Heart left ventricle (tissue), 16 donors: ENCODE measurements at regions of chr17 and their contacts with region 1.

Region 1: DNA sequence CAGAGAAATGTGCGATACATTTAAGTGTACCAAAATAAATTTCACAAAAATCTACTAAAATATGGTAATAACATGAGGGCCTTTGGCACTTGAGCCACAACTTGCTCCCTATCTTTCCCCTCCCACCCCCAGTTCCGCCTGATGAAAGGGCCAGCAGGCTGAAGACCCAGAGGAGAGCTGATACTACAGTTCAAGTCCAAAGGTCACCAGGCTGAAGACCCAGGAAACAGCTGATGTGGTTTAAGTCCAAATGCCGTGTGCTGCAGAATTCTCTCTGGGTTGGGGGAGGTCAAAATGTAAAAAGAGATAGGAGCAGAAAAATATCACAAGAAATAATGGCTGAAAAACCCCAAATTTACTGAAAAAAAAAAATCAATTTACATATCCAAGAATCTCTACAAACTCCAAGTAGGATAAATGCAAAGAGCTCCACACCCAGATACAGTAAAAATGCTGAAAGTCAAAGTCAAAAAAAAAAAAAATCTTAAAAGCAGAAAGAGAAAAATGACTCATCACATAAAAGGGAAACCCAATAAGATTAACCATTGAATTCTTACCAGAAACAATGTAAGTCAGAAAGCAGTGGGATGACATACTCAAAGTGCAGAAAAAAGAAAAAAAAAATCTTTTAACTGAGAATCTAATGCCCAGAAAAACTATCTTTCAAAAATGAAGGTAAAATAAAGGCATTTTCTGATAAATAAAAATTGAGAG is 452.1 kb upstream of the ASIC2 start:
- DNase-seq: no peak
- ATAC-seq: no peak
- H3K4me3 ChIP-seq: no peak overlapping the region
- H3K27ac ChIP-seq: no peak overlapping the region
- H3K4me1 ChIP-seq: no peaks in the 10 kb centered on the region
- H3K27me3 ChIP-seq: peaks cover 0 to 39% (median 0%) of the 10 kb centered on the region in 9 donors
- CTCF ChIP-seq: no peak
- POLR2A ChIP-seq: no peak

Region 2: GRCh38 chr17:33012522-33013033 is 732.6 kb before region 1 on chr17:
- intact Hi-C with region 1: loop called in 1 of 10 experiments (anchors 10 kb)
- DNase-seq: no peak
- ATAC-seq: no peak
- H3K4me3 ChIP-seq: no peak overlapping the region
- H3K27ac ChIP-seq: no peak overlapping the region
- H3K4me1 ChIP-seq: no peaks in the 10 kb centered on the region
- H3K27me3 ChIP-seq: peaks cover 0 to 6% (median 0%) of the 10 kb centered on the region in 9 donors
- CTCF ChIP-seq: no peak
- POLR2A ChIP-seq: no peak

Region 3: DNA sequence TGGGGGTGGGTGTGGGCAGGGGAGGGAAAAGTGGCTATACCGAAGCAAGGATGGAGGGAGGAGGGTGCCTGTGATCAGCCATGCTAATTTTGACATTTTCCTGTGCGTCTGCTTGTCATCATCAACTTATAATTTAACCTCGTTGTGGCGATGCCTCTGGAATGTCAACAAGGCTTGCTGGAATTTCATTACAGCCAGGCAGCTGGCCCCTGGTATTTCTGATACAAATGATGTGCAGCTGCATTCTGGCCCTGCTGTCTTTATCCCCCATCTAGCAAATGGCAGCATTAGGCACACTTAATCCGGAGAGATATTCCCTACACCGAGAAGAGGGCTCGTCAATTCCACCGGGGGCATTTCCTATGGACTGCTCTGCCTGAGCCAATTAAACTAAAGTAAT is 231.6 kb after region 1 on chr17:
- intact Hi-C with region 1: no loop called
- DNase-seq: no peak
- ATAC-seq: no peak
- H3K4me3 ChIP-seq: no peak overlapping the region
- H3K27ac ChIP-seq: no peak overlapping the region
- H3K4me1 ChIP-seq: peaks cover 0 to 17% (median 0%) of the 10 kb centered on the region in 12 donors
- H3K27me3 ChIP-seq: no peaks in the 10 kb centered on the region
- CTCF ChIP-seq: no peak
- POLR2A ChIP-seq: no peak